ENCODE measurements at regions of chr10 and their contacts with region 1.

Region 1: DNA sequence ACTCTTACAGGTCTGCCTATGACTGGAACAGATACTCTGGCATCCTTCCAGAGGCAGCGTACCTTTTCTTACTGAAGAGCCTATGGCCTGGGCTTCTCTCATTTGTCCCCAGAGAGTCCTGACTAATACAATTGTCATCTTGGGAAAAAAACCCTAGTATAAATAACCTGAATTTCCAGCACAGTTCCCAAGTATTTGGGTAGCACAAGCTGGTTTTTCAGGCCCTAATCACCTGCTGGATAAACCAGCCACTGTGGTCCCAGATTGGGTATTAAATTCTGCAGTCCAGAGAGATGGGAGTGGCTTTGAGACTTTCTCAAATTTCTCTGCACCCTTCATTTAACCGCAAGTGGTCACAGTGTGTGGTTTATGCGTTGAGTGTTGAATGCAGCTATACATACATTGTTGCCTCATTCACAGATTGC is 186.8 kb upstream of the NEBL start:
- DNase-seq: peak; percentile 97
- ATAC-seq: peak; percentile 80
- H3K4me3 ChIP-seq: no peak overlapping the region
- H3K27ac ChIP-seq: peak overlapping the region; percentile 70
- H3K4me1 ChIP-seq: peaks cover 34% of the 10 kb centered on the region
- H3K27me3 ChIP-seq: no peaks in the 10 kb centered on the region
- CTCF ChIP-seq: no peak

Region 2: DNA sequence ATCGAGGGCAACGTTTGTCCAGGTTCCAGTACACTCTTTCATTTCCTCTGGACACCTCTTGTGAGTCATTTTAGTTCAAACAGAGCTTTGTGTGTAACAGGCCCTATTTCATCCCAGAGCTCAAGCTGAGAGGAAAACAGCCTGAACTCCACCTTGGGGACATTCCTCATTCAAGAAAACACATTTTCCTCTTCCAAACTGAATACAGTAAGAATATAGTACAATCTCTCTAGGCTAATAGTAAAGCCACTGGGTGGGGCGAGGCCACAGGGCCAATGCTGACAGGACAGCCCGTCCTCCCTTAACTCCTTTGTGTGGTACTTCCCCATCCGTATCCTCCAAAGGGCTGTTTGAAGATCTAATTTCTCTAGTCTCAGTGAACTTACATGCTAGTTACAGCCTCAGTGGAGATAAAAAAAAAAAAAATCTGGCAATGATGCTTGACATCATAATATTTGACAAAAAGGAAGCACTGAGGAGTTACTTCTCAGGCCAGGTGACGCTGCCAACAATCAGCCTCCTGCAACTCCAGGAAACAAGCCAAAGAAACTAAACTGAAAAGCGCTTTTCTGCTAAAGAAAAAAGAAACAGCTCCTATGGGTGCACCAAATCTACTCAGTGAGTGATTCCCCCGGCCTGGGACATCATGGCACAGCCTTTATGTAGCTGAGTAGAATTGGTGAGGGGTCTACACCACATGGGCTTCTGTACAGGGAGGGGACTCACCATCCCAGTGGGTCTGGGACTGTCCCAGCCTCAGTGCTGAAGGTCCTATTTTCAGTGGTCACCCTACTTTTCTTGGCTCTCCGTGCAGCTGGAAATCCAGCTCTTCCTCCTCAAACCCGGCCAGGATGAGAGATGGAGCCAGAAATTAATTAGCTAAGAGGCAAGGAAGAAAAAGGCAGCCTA is 51.4 kb after region 1 on chr10:
- CTCF ChIA-PET with region 1: interaction called, 3 read pairs
- POLR2A ChIA-PET with region 1: no interaction called
- intact Hi-C with region 1: loop called (anchors 1 kb)
- DNase-seq: peak; percentile 94
- ATAC-seq: peak; percentile 92
- H3K4me3 ChIP-seq: peak overlapping the region; percentile 56; the same call in 1 of the 2 replicates
- H3K27ac ChIP-seq: peak overlapping the region; percentile 98
- H3K4me1 ChIP-seq: peaks cover 28% of the 10 kb centered on the region
- H3K27me3 ChIP-seq: no peaks in the 10 kb centered on the region
- CTCF ChIP-seq: no peak

Region 3: DNA sequence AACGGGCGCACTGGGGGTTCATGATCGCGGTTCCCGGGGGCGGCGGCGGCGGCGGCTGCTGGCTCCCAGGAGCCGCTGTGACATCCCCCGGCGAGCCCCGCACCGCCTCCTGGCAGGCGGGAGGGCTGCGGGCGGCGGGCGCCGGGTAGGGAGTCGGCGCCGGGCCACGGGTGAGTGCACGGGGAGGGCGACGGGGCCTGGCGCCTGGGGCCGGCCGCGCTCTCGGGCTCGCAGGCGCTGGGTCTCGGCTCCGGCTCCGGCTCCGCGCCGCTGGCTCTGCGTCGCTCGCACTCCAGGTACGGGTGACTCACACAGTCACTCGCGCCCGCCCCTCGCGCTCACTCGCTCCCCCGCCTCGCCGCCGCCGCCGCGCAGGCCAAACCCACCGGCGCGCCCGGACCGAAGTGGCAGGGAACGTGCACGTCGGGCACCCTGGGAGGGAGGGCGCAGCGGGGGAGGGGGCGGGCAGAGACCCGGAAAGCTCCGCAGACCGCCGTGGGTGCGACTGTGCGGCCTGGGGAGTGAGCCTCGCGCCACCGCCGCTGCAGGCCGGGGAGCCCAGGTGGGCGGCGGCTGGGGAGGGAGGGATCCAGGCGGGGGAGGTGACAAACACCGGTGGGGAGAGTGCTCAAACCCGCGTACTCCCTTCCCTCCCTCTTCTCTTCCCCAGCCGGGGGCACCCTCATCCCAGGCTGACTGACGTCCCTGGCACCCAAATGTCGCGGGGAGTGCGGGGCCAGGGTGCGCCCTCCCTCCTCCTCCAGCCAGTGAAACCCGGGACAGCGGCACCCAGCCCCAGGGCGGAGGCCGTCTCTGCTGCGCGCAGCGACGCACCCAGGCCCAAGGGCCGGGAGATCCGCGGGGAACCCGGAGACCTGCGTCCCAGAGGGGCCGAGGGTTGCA is 90.2 kb after region 1 on chr10:
- CTCF ChIA-PET with region 1: no interaction called
- POLR2A ChIA-PET with region 1: no interaction called
- intact Hi-C with region 1: loop called (anchors 5 kb)
- DNase-seq: peak; percentile 77
- ATAC-seq: peak; percentile 72
- H3K4me3 ChIP-seq: peak overlapping the region; percentile 91
- H3K27ac ChIP-seq: peak overlapping the region; percentile 79
- H3K4me1 ChIP-seq: peaks cover 34% of the 10 kb centered on the region
- H3K27me3 ChIP-seq: no peaks in the 10 kb centered on the region
- CTCF ChIP-seq: no peak

Region 4: DNA sequence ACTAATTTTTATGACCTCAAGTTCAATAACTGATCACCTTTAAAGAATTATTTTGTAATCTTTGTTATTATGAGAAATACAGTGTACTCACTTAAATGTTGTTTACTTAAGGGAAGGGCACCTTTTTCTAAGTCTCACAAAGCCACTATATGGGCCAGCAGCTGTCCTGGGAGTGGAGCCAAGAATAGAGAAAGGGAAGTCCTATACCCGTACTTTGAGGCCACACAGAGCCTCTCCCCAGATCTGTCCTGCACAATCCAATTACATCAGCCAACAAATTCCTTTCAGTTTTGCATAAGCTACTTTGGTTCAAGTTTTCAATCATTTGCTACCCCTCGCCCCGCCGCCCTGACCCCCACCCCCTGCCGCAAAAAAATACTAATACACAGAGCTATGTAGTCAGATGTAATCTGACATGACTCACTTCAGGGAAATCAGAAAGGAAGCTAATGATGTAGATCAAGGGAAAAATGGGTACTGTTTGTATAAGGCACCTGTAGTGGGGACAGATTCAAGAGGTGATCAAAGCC is 110.6 kb after region 1 on chr10:
- CTCF ChIA-PET with region 1: no interaction called
- POLR2A ChIA-PET with region 1: no interaction called
- intact Hi-C with region 1: loop called (anchors 2 kb)
- DNase-seq: peak; percentile 85
- ATAC-seq: peak; percentile 86
- H3K4me3 ChIP-seq: peak overlapping the region; percentile 32; the same call in 1 of the 2 replicates
- H3K27ac ChIP-seq: peak overlapping the region; percentile 77
- H3K4me1 ChIP-seq: peaks cover 38% of the 10 kb centered on the region
- H3K27me3 ChIP-seq: no peaks in the 10 kb centered on the region
- CTCF ChIP-seq: no peak

Region 5: DNA sequence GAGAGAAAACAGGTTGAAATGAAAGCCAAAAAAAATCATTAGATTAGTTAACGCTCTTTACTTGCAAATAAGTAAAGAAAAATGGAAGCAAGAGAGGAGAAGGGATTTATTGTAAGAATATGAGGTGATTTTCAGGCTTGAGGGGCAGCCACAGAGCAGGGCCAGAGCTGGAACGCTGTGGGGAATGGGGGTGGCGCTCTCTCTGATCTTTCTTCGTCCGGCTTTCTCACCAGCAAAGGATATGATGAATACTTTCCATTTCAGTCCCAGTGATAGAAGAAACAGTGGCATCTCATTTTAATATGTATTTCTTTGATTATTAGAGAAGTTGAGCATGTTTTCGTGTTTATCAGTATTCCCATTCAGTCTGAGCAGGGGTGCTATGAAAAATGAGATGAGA is 329.4 kb after region 1 on chr10:
- CTCF ChIA-PET with region 1: no interaction called
- POLR2A ChIA-PET with region 1: no interaction called
- intact Hi-C with region 1: no loop called
- DNase-seq: no peak
- ATAC-seq: no peak
- H3K4me3 ChIP-seq: no peak overlapping the region
- H3K27ac ChIP-seq: no peak overlapping the region
- H3K4me1 ChIP-seq: no peaks in the 10 kb centered on the region
- H3K27me3 ChIP-seq: no peaks in the 10 kb centered on the region
- CTCF ChIP-seq: no peak